ENCODE measurements at regions of chr1 and their contacts with region 1.

Region 1: DNA sequence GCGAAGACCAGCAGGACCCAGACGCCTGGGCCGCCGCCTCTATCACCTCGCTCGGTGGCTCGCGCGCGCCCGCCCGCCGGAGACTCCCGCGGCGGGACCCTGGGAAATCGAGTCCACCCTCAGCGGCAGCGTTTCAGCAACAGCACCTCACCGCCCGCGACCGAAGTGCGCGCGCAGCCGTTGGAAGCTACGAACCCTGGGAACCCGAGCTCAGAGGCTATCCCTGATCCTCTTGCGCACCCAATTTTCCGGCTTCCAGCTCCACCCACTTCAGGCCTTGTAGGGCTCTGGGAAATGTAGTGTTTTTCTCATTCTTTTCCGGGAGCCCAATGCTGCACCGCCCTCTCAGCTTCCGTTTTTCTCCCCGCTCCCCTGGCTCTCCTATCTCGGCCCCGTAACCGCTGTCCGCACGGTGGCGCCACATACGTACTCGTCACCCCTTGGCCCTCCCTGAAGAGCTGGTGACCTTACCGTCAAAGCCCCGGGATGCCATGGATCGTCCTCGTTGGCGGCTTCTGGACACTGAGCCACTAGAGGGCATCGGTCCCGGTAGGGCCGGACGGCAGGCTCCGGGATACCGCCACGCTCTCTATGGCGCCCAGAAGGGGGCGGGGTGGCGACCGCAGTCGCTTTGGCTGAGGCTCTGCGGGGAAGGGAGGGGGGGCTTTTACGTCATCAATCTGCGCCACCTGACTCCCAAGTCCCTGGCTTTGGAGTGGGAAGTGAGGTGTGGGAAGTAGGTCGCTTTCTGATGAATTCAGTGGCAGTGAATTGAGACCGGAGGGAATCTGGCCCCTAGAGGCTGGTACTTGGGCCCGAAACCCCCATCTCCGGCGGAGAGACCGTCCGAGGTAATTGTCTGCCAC is at the starts of genes ODR4 and TPR:
- H3K4me3 ChIP-seq: peak within 1 kb of the TSS; percentile 95
- H3K27ac ChIP-seq: peak within 1 kb of the TSS; percentile 90
- H3K4me1 ChIP-seq: peaks cover 4% of the 10 kb centered on the region; the same call in 1 of the 2 replicates
- CTCF ChIP-seq: peak; percentile 100

Region 2: DNA sequence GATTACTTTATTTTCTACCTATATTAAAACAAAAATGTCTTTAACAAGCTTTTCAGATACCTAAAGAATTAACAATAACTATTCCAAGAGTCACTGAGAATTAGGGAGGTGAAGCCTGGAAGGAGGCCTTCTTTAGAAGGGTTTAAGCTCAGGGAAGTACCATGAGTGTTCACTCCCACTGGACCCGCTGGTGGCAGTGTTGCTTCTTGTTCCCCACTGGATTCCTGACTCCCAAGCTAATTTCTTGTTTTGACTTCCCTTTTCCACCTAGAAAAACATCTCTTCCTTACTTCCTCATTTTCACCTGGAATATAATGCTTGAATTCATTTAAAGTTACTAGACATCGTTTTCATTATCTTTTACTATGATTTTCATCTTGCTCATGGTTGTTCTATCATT is 376.9 kb before region 1 on chr1:
- CTCF ChIA-PET with region 1: no interaction called
- POLR2A ChIA-PET with region 1: no interaction called
- H3K4me3 ChIP-seq: no peak overlapping the region
- H3K27ac ChIP-seq: no peak overlapping the region
- H3K4me1 ChIP-seq: no peaks in the 10 kb centered on the region
- CTCF ChIP-seq: no peak

Region 3: DNA sequence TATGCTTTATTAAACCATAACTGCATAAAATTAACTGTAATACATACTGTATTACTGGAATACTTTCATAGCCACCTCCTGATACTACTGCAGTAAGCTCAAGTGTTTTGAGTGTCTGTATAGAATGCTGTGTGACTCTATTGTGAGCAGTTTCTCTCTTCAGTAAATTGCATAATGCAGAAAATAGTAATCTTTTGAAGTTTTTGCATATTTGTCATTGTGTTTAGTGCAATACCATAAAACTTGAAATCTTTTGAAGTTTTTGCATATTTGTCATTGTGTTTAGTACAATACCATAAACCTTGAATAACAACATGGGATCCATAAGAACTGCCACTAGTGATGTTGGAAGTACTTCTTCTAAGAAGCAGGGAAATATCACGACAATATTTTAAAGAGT is 11.4 kb before region 1 on chr1:
- CTCF ChIA-PET with region 1: interaction called, 10 read pairs
- POLR2A ChIA-PET with region 1: interaction called, 11 read pairs
- H3K4me3 ChIP-seq: no peak overlapping the region
- H3K27ac ChIP-seq: no peak overlapping the region
- H3K4me1 ChIP-seq: no peaks in the 10 kb centered on the region
- CTCF ChIP-seq: no peak

Region 4: GRCh38 chr1:186386725-186387383 is 11.5 kb after region 1 on chr1:
- CTCF ChIA-PET with region 1: interaction called, 13 read pairs
- POLR2A ChIA-PET with region 1: interaction called, 5 read pairs
- H3K4me3 ChIP-seq: no peak overlapping the region
- H3K27ac ChIP-seq: no peak overlapping the region
- H3K4me1 ChIP-seq: no peaks in the 10 kb centered on the region
- CTCF ChIP-seq: no peak

Region 5: DNA sequence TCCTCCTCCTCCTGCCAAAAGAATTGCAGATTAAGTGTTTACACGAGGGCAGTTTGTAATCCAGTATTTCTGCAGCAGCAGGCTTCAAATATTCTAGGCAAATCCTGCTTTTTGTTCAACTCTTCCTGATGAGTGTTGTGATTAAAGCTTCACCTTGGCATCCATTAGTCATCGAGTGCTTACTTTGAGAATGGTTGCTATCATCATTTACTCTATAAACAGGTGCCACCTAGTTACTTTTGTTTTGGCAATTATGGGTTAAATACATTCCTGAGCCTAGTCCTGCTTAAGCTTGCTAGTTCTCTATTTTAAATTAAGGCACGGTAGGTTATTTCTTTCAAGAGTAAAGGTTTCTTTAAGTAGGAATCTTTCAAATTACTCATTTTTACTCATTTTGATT is 65.3 kb after region 1 on chr1:
- CTCF ChIA-PET with region 1: no interaction called
- POLR2A ChIA-PET with region 1: no interaction called
- H3K4me3 ChIP-seq: no peak overlapping the region
- H3K27ac ChIP-seq: no peak overlapping the region
- H3K4me1 ChIP-seq: no peaks in the 10 kb centered on the region
- CTCF ChIP-seq: no peak

Measured in HEK293 (cell line).